ENCODE measurements at regions of chr1 and their contacts with region 1.

Region 1: DNA sequence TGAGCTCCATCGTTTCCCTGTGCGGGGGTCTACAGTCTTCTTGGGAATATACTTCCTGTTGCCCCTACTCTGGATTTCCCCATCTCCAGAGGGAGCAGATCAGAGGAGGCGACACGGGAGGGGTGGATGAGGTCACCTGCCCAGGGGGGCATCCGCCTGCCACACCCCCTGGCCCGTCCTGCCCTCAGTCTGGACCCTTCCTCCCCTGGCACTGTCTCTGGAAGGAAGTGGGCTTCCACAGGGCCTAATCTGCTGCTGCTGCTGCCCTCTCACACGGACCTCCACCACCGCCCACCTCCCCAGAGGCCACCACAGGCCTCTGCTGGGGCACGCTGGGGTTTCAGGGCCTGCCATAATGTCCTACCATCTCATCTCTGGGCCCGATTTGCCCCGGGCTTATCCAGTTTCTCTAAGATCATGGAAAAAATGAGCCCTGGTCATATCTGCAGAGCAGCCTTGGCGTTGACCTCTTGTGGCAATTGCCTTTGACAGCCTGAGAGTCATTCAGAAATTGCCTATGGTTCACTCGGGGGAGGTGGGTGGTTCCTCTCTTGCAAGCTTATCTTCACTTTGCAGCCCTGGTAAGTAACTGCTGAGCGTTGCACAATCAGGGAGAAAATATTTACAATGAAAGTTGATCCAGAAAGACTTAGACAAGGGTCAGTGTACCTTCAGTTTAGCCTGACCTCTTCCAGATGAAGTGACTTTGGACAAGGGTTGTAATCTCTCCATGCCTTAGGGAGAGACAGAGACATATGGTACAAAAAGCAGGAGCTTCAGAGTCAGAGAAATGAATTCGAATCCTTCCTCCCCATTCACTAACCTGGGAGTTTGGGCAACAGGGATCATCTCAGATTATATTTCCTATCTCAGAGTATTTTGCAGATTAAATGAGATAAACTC is 252.4 kb downstream of the TOMM20 start:
- DNase-seq: no peak
- H3K4me3 ChIP-seq: no peak overlapping the region
- H3K27ac ChIP-seq: no peak overlapping the region
- H3K4me1 ChIP-seq: peaks cover 9% of the 10 kb centered on the region
- H3K27me3 ChIP-seq: no peaks in the 10 kb centered on the region
- CTCF ChIP-seq: no peak

Region 2: GRCh38 chr1:234823191-234824176 is 52.7 kb before region 1 on chr1:
- CTCF ChIA-PET with region 1: no interaction called
- dilution Hi-C with region 1: no loop called
- in situ Hi-C with region 1: no loop called
- intact Hi-C with region 1: no loop called
- DNase-seq: no peak
- H3K4me3 ChIP-seq: no peak overlapping the region
- H3K27ac ChIP-seq: no peak overlapping the region
- H3K4me1 ChIP-seq: no peaks in the 10 kb centered on the region
- H3K27me3 ChIP-seq: no peaks in the 10 kb centered on the region
- CTCF ChIP-seq: no peak

Region 3: GRCh38 chr1:234918181-234918841 is 42.1 kb after region 1 on chr1:
- CTCF ChIA-PET with region 1: no interaction called
- dilution Hi-C with region 1: loop called (anchors 5 kb)
- in situ Hi-C with region 1: no loop called
- intact Hi-C with region 1: no loop called
- DNase-seq: no peak
- H3K4me3 ChIP-seq: no peak overlapping the region
- H3K27ac ChIP-seq: no peak overlapping the region
- H3K4me1 ChIP-seq: no peaks in the 10 kb centered on the region
- H3K27me3 ChIP-seq: no peaks in the 10 kb centered on the region
- CTCF ChIP-seq: no peak

Region 4: DNA sequence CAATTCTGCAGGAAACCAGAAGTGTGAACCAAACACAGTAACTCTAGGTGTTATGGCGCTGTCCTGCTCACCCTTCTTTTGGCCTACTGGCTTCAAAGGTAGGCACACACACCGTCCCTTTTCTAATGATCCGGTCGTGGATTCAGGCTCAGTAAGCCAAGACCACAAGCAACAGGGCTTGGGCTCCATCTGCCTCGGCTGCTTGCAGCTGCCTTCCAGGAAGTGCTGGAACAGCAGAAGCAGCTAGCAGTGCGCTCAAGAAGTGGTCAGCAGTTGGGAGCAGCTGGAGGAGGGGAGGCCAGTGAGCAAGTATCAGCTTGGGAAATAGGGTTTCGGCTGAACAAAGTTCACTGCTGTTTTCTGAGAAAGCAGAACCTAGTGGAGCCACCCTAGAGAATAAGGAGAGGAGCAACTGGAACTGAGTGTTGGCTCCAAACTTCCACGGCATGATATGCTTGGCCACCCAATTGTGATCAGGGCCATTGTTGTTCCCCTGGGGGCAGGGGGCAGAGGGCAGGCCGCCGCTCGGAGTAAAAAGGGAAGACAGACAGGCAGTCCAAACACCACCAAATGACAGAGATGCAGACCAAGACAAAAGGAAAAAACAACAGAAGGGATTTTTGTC is 79.0 kb after region 1 on chr1:
- CTCF ChIA-PET with region 1: no interaction called
- dilution Hi-C with region 1: loop called (anchors 5 kb)
- in situ Hi-C with region 1: no loop called
- intact Hi-C with region 1: no loop called
- DNase-seq: no peak
- H3K4me3 ChIP-seq: no peak overlapping the region
- H3K27ac ChIP-seq: no peak overlapping the region
- H3K4me1 ChIP-seq: peaks cover 8% of the 10 kb centered on the region
- H3K27me3 ChIP-seq: no peaks in the 10 kb centered on the region
- CTCF ChIP-seq: no peak

Region 5: GRCh38 chr1:235093696-235094592 is 217.7 kb after region 1 on chr1:
- CTCF ChIA-PET with region 1: no interaction called
- dilution Hi-C with region 1: loop called (anchors 5 kb)
- in situ Hi-C with region 1: no loop called
- intact Hi-C with region 1: no loop called
- DNase-seq: no peak
- H3K4me3 ChIP-seq: no peak overlapping the region
- H3K27ac ChIP-seq: no peak overlapping the region
- H3K4me1 ChIP-seq: no peaks in the 10 kb centered on the region
- H3K27me3 ChIP-seq: no peaks in the 10 kb centered on the region
- CTCF ChIP-seq: peak; percentile 90 to 92

Measured in mammary epithelial cell (primary cell).